B cell (primary cell): ENCODE measurements at regions of chr12 and their contacts with region 1.

Region 1: GRCh38 chr12:64610149-64610678 is at the start of gene RASSF3:
- DNase-seq: peak; percentile 83
- ATAC-seq: peak; percentile 63
- H3K4me3 ChIP-seq: peak within 1 kb of the TSS; percentile 85 to 98 (median 94)
- H3K4me3 Mint-ChIP-seq: peak within 1 kb of the TSS; percentile 99
- H3K27ac ChIP-seq: peak within 1 kb of the TSS; percentile 83 to 89
- H3K27ac Mint-ChIP-seq: peak within 1 kb of the TSS; percentile 99
- H3K4me1 ChIP-seq: peaks cover 33 to 37% of the 10 kb centered on the region in 2 donors
- H3K4me1 Mint-ChIP-seq: peaks cover 39% of the 10 kb centered on the region
- H3K27me3 ChIP-seq: no peaks in the 10 kb centered on the region
- H3K27me3 Mint-ChIP-seq: no peaks in the 10 kb centered on the region
- CTCF ChIP-seq: no peak
- total RNA-seq, gene RASSF3: 104 and 107 TPM in 2 replicates

Region 2: GRCh38 chr12:63779498-63780481 is 830.4 kb before region 1 on chr12 and contains the start of gene RXYLT1:
- CTCF ChIA-PET with region 1: no interaction called
- POLR2A ChIA-PET with region 1: no interaction called
- intact Hi-C with region 1: loop called (anchors 2 kb)
- DNase-seq: peak; percentile 92
- ATAC-seq: peak; percentile 93
- H3K4me3 ChIP-seq: peak within 1 kb of the TSS; percentile 76 to 90 (median 85)
- H3K4me3 Mint-ChIP-seq: peak within 1 kb of the TSS; percentile 98
- H3K27ac ChIP-seq: peak within 1 kb of the TSS; percentile 77 to 91
- H3K27ac Mint-ChIP-seq: peak within 1 kb of the TSS; percentile 95
- H3K4me1 ChIP-seq: peaks cover 6 to 8% of the 10 kb centered on the region in 2 donors
- H3K4me1 Mint-ChIP-seq: peaks cover 16% of the 10 kb centered on the region
- H3K27me3 ChIP-seq: no peaks in the 10 kb centered on the region
- H3K27me3 Mint-ChIP-seq: no peaks in the 10 kb centered on the region
- CTCF ChIP-seq: no peak
- total RNA-seq, gene RXYLT1: 16.2 and 16.5 TPM in 2 replicates

Region 3: DNA sequence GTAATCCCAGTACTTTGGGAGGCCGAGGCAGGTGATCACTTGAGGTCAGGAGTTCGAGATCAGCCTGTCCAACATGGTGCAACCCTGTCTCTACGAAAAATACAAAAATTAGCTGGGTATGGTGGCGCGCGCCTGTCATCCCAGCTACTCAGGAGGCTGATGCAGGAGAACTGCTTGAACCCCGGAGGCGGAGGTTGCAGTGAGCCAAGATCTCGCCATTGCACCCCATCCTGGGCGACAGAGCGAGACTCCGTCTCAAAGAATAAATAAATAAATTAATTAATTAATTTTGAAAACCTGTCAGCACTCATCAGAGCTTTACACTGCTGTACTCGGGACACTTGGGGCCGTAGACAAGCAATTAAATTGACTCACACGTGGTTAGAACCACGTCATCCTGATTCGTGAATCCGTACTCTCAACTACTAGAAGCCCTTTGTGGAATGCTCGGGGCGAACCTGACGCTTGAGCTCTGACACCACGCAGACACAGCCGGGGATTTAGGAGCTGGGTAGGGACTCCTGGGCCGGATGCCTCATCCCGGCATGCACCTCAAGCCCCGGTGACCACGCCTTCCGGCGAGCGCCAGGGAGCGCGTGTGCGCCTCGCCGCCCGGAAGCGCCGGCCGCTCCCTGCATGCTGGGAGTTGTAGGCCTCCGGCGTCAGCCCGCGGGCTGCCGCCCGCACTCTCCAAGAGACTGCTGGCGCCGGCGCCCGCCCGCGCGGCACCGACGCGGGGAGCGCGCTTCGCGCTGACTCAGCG is 206.3 kb before region 1 on chr12 and contains the start of gene XPOT:
- CTCF ChIA-PET with region 1: no interaction called
- POLR2A ChIA-PET with region 1: no interaction called
- intact Hi-C with region 1: loop called (anchors 5 kb)
- DNase-seq: peak; percentile 96
- ATAC-seq: peak; percentile 93
- H3K4me3 ChIP-seq: peak within 1 kb of the TSS; percentile 56 to 97 (median 91)
- H3K4me3 Mint-ChIP-seq: peak within 1 kb of the TSS; percentile 98
- H3K27ac ChIP-seq: peak within 1 kb of the TSS; percentile 71 to 80
- H3K27ac Mint-ChIP-seq: peak within 1 kb of the TSS; percentile 97
- H3K4me1 ChIP-seq: peaks cover 5 to 12% of the 10 kb centered on the region in 2 donors
- H3K4me1 Mint-ChIP-seq: peaks cover 15% of the 10 kb centered on the region
- H3K27me3 ChIP-seq: no peaks in the 10 kb centered on the region
- H3K27me3 Mint-ChIP-seq: no peaks in the 10 kb centered on the region
- CTCF ChIP-seq: no peak
- total RNA-seq, gene XPOT: 48.8 and 56.1 TPM in 2 replicates

Region 4: DNA sequence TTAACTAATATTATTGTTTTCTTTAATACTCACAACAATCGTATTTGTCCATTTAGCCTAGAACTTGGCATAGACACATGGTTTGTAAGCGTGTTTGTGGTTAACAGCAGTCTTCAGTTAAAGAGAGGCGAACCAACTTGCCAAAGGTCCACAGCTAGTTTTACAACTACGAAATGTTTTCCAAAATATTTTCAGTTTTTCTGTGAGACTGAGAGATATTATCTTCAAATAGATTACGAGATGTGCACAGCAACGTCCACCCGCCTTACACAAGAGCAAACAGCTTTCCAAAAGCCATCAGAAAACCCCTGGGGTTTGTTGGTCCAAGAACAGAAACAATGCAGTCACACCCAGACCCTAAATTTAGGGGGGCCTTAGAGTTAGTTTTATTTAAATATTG is 58.5 kb before region 1 on chr12:
- CTCF ChIA-PET with region 1: interaction called, 20 read pairs
- POLR2A ChIA-PET with region 1: no interaction called
- intact Hi-C with region 1: loop called (anchors 1 kb)
- DNase-seq: no peak
- ATAC-seq: no peak
- H3K4me3 ChIP-seq: no peak overlapping the region
- H3K4me3 Mint-ChIP-seq: no peak overlapping the region
- H3K27ac ChIP-seq: no peak overlapping the region
- H3K27ac Mint-ChIP-seq: no peak overlapping the region
- H3K4me1 ChIP-seq: peaks cover 0 to 3% of the 10 kb centered on the region in 2 donors
- H3K4me1 Mint-ChIP-seq: no peaks in the 10 kb centered on the region
- H3K27me3 ChIP-seq: no peaks in the 10 kb centered on the region
- H3K27me3 Mint-ChIP-seq: no peaks in the 10 kb centered on the region
- CTCF ChIP-seq: no peak

Region 5: DNA sequence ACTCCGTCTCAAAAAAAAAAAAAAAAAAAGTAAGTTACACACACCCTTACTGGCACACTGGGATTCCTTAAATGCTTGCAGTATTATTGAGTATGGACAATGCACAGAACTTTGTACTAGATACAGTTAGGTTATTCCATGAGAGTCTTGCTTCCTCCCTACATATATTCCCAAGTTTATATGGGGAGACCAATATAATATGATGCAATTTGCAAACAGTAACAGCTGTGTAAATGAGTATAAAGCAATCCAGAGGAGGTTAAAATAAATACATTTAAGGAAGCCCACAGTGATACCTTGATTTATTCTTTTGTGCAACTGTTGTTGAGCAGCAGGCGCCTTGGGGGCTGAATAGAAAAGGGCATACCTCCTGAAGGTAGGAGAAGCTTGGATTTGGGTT is 26.6 kb after region 1 on chr12:
- CTCF ChIA-PET with region 1: interaction called, 4 read pairs
- POLR2A ChIA-PET with region 1: interaction called, 11 read pairs
- intact Hi-C with region 1: no loop called
- DNase-seq: no peak
- ATAC-seq: no peak
- H3K4me3 ChIP-seq: no peak overlapping the region
- H3K4me3 Mint-ChIP-seq: peak overlapping the region; percentile 18
- H3K27ac ChIP-seq: peak overlapping the region in 1 of 2 donors; percentile 4
- H3K27ac Mint-ChIP-seq: peak overlapping the region; percentile 44
- H3K4me1 ChIP-seq: peaks cover 23 to 38% of the 10 kb centered on the region in 2 donors
- H3K4me1 Mint-ChIP-seq: peaks cover 62% of the 10 kb centered on the region
- H3K27me3 ChIP-seq: no peaks in the 10 kb centered on the region
- H3K27me3 Mint-ChIP-seq: no peaks in the 10 kb centered on the region
- CTCF ChIP-seq: no peak

Region 6: DNA sequence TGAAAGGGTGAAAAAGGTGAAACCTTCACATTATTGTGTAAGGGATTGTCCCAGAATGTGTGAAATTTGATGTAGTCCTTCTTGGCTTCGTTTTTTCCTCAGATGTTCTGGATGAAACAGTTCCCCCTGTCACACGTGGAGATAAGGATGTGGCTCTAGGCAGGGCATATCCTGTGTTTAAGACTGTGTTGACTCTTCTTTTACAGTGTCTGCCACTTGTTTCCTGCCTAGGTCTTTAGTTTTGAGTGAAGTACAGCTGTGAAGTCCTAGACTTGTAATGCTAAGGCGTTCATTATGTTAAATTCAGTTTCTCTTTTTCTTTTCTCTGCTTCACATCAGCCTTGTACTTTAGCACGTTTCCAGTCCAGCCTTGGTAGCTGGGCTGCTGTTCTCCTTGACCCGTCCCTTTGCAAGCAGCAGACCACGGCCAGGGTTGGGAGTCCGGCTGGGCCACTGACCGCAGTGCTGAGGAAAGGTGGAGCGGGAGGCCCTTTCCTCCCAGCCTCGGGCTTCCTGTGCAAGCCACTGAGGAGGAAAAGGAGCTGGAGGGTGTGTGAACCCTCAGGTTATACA is 59.1 kb after region 1 on chr12:
- CTCF ChIA-PET with region 1: interaction called, 11 read pairs
- POLR2A ChIA-PET with region 1: interaction called, 10 read pairs
- intact Hi-C with region 1: loop called (anchors 2 kb)
- DNase-seq: peak; percentile 67
- ATAC-seq: peak; percentile 73
- H3K4me3 ChIP-seq: peak overlapping the region; percentile 31 to 62 (median 52)
- H3K4me3 Mint-ChIP-seq: peak overlapping the region; percentile 89
- H3K27ac ChIP-seq: peak overlapping the region; percentile 78 to 87
- H3K27ac Mint-ChIP-seq: peak overlapping the region; percentile 83
- H3K4me1 ChIP-seq: peaks cover 93 to 94% of the 10 kb centered on the region in 2 donors
- H3K4me1 Mint-ChIP-seq: peaks cover 91% of the 10 kb centered on the region
- H3K27me3 ChIP-seq: no peaks in the 10 kb centered on the region
- H3K27me3 Mint-ChIP-seq: no peaks in the 10 kb centered on the region
- CTCF ChIP-seq: no peak

Region 7: DNA sequence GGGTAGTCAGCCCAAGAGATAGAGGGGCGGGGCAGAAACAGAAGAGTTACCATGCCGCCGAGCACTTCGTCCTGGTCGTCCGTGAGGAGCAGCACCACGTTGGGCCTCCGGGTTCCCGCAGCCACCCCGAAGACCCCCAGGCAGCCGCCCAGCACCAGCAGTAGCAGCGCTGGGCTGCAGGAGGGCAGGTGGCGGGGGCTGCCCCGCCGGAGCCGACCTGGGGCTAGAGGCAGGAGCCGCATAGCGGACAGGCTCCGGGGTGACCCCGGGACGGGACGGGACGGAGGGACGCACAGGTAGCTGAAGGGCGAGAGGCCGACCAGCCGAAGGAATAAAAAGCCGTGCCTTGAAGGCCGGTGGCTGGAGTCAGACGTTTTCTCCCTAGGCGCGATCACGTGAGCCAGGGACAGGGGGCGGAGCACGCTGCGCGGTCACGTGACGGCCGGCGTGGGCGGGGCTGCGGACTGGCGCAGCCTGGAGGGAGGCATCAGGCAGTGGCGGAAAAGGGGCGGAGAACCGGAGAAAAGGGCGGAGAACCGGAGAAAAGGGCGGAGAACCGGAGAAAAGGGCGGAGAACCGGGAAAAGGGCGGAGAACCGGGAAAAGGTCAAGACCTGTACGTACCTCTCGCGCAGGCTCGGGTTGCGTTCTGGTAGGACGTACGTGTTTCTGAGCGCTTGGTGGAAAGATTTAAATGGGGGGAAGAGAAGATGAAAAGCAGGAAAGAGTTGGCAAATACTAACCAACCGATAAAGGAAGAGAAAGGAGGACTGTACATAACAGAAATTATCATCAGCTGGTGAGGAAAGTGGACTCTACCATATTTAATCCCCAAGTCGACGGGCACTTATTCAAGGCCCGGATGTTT is 149.1 kb after region 1 on chr12 and contains the start of gene GNS:
- CTCF ChIA-PET with region 1: no interaction called
- POLR2A ChIA-PET with region 1: no interaction called
- intact Hi-C with region 1: loop called (anchors 2 kb)
- DNase-seq: peak; percentile 94
- ATAC-seq: peak; percentile 92
- H3K4me3 ChIP-seq: peak within 1 kb of the TSS; percentile 67 to 89 (median 84)
- H3K4me3 Mint-ChIP-seq: peak within 1 kb of the TSS; percentile 94
- H3K27ac ChIP-seq: peak within 1 kb of the TSS; percentile 48 to 86
- H3K27ac Mint-ChIP-seq: peak within 1 kb of the TSS; percentile 94
- H3K4me1 ChIP-seq: peaks cover 24 to 25% of the 10 kb centered on the region in 2 donors
- H3K4me1 Mint-ChIP-seq: peaks cover 41% of the 10 kb centered on the region
- H3K27me3 ChIP-seq: no peaks in the 10 kb centered on the region
- H3K27me3 Mint-ChIP-seq: no peaks in the 10 kb centered on the region
- CTCF ChIP-seq: no peak
- total RNA-seq, gene GNS: 26.7 and 31.7 TPM in 2 replicates